ENCODE measurements at regions of chr21 and their contacts with region 1.

Region 1: GRCh38 chr21:25862596-25862995 is 127.8 kb downstream of the GABPA start:
- DNase-seq: peak; percentile 41
- ATAC-seq: peak; percentile 53
- H3K4me3 Mint-ChIP-seq: no peak overlapping the region
- H3K27ac Mint-ChIP-seq: no peak overlapping the region
- H3K4me1 Mint-ChIP-seq: no peaks in the 10 kb centered on the region
- H3K27me3 Mint-ChIP-seq: no peaks in the 10 kb centered on the region

Region 2: DNA sequence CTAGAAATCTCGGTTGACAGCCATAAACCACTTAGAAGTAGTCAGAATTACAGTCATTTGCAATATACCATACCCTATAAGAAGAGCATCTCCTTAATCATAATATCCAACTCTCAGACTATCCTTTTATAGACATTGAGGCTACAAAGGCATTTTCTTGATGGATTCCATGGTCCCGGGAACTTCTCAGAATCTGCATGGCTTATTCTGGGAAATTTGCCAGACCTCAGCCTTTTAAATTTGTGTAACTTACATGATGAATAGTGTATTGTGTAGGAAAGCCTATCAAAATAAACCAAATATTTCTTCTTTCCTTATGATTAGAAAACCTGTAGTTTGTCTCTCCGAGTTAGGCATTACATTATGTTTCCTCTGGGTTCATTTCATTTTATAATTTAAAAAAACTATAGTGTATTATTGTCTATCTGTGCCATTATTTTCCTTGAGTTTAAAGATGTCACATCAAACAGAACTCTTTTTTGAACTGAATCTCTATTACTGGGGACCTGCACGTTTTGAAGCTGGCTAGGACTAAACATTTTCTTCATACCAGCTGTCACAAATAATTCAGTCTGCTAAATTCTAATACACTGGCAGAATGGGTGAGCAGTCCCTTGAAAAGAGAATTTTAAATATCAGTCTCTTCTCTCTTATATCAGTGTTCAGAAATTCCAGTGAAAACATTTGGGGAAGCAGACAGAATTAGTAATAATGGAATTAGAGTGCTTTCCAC is 24.9 kb before region 1 on chr21:
- CTCF ChIA-PET with region 1: no interaction called
- POLR2A ChIA-PET with region 1: no interaction called
- intact Hi-C with region 1: no loop called
- DNase-seq: no peak
- ATAC-seq: no peak
- H3K4me3 Mint-ChIP-seq: no peak overlapping the region
- H3K27ac Mint-ChIP-seq: no peak overlapping the region
- H3K4me1 Mint-ChIP-seq: no peaks in the 10 kb centered on the region
- H3K27me3 Mint-ChIP-seq: peaks cover 12% of the 10 kb centered on the region

Region 3: GRCh38 chr21:25850126-25850842 is 12.3 kb before region 1 on chr21:
- CTCF ChIA-PET with region 1: interaction called, 16 read pairs
- POLR2A ChIA-PET with region 1: no interaction called
- intact Hi-C with region 1: no loop called
- DNase-seq: no peak
- ATAC-seq: no peak
- H3K4me3 Mint-ChIP-seq: no peak overlapping the region
- H3K27ac Mint-ChIP-seq: no peak overlapping the region
- H3K4me1 Mint-ChIP-seq: peaks cover 4% of the 10 kb centered on the region
- H3K27me3 Mint-ChIP-seq: peaks cover 2% of the 10 kb centered on the region

Measured in activated CD4-positive, alpha-beta T cell treated with anti-CD3 and anti-CD28 coated beads for 36 hours (primary cell).